ENCODE measurements at regions of chr10 and their contacts with region 1.

Region 1: DNA sequence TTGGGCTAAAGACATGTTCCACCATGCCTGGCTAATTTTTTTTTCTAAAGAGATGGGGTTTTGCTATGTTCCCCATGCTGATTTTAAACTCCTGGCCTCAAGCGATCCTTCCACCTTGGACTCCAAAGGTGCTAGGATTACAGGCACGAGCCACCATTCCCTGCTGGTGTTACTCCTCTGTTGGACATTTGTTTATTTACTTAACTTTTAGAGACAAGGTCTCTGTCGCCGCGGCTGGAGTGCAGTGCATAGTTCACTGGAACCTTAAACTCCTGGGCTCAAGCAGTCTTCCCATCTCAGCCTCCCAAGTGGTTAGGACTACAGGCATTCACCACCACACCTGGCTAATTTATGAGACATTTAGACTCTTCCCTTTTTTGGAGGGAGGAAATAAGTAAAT is 38.9 kb downstream of the CCAR1 start:
- DNase-seq: no peak
- ATAC-seq: no peak
- H3K4me3 ChIP-seq: no peak overlapping the region
- H3K27ac ChIP-seq: peak overlapping the region in 3 of 4 donors; percentile 27 to 54 (median 31)
- H3K4me1 ChIP-seq: peaks cover 3 to 5% of the 10 kb centered on the region in 2 donors
- H3K27me3 ChIP-seq: no peaks in the 10 kb centered on the region
- CTCF ChIP-seq: no peak
- POLR2A ChIP-seq: no peak

Region 2: DNA sequence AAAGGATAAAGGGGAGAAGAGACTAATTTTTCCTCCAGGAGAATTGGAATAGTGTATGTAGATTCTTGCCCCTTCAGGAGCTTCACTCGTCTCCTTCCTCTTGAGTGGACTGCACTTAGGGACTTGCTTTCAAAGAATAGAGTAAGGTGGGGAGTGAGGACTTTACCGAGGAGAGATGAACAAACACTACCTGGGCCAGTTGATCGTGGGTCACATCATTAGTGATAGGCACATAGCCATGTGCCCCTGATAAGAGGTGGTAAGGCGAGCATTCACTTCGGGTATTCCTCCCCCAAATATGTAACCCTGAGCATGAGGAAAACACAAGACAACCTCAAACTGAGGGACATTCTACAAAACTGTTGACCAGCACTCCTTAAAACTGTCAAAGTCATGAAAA is 214.0 kb after region 1 on chr10:
- in situ Hi-C with region 1: loop called in 1 of 4 experiments (anchors 10 kb)
- intact Hi-C with region 1: no loop called
- DNase-seq: no peak
- ATAC-seq: no peak
- H3K4me3 ChIP-seq: no peak overlapping the region
- H3K27ac ChIP-seq: no peak overlapping the region
- H3K4me1 ChIP-seq: no peaks in the 10 kb centered on the region
- H3K27me3 ChIP-seq: no peaks in the 10 kb centered on the region
- CTCF ChIP-seq: no peak
- POLR2A ChIP-seq: no peak

Region 3: GRCh38 chr10:69045441-69046300 is 285.7 kb after region 1 on chr10:
- in situ Hi-C with region 1: no loop called
- intact Hi-C with region 1: no loop called
- DNase-seq: no peak
- ATAC-seq: peak in 1 of 2 donors; percentile 27
- H3K4me3 ChIP-seq: no peak overlapping the region
- H3K27ac ChIP-seq: no peak overlapping the region
- H3K4me1 ChIP-seq: no peaks in the 10 kb centered on the region
- H3K27me3 ChIP-seq: no peaks in the 10 kb centered on the region
- CTCF ChIP-seq: no peak
- POLR2A ChIP-seq: no peak